ENCODE measurements at regions of chr5 and their contacts with region 1.

Region 1: GRCh38 chr5:151252762-151253604 is at the start of gene GM2A:
- DNase-seq: peak; percentile 100
- H3K4me3 ChIP-seq: peak within 1 kb of the TSS; percentile 97
- H3K27ac ChIP-seq: peak within 1 kb of the TSS; percentile 88
- H3K4me1 ChIP-seq: peaks cover 56% of the 10 kb centered on the region
- CTCF ChIP-seq: no peak
- total RNA-seq, gene GM2A: 52.4 and 60.2 TPM in 2 replicates

Region 2: GRCh38 chr5:150486402-150487198 is 766.4 kb before region 1 on chr5:
- CTCF ChIA-PET with region 1: no interaction called
- POLR2A ChIA-PET with region 1: interaction called, 4 read pairs
- intact Hi-C with region 1: loop called (anchors 10 kb)
- DNase-seq: peak; percentile 79
- H3K4me3 ChIP-seq: peak overlapping the region; percentile 92
- H3K27ac ChIP-seq: peak overlapping the region; percentile 73
- H3K4me1 ChIP-seq: peaks cover 57% of the 10 kb centered on the region
- CTCF ChIP-seq: no peak

Region 3: GRCh38 chr5:151126199-151126645 is 126.8 kb before region 1 on chr5:
- CTCF ChIA-PET with region 1: interaction called, 9 read pairs
- POLR2A ChIA-PET with region 1: interaction called, 14 read pairs
- intact Hi-C with region 1: no loop called
- DNase-seq: peak; percentile 83
- H3K4me3 ChIP-seq: no peak overlapping the region
- H3K27ac ChIP-seq: peak overlapping the region; percentile 86
- H3K4me1 ChIP-seq: peaks cover 91% of the 10 kb centered on the region
- CTCF ChIP-seq: peak; percentile 94

Region 4: GRCh38 chr5:151196556-151197290 is 56.3 kb before region 1 on chr5:
- CTCF ChIA-PET with region 1: interaction called, 3 read pairs
- POLR2A ChIA-PET with region 1: interaction called, 5 read pairs
- intact Hi-C with region 1: loop called (anchors 2 kb)
- DNase-seq: peak; percentile 96
- H3K4me3 ChIP-seq: peak overlapping the region; percentile 25
- H3K27ac ChIP-seq: peak overlapping the region; percentile 92
- H3K4me1 ChIP-seq: peaks cover 55% of the 10 kb centered on the region
- CTCF ChIP-seq: no peak

Region 5: DNA sequence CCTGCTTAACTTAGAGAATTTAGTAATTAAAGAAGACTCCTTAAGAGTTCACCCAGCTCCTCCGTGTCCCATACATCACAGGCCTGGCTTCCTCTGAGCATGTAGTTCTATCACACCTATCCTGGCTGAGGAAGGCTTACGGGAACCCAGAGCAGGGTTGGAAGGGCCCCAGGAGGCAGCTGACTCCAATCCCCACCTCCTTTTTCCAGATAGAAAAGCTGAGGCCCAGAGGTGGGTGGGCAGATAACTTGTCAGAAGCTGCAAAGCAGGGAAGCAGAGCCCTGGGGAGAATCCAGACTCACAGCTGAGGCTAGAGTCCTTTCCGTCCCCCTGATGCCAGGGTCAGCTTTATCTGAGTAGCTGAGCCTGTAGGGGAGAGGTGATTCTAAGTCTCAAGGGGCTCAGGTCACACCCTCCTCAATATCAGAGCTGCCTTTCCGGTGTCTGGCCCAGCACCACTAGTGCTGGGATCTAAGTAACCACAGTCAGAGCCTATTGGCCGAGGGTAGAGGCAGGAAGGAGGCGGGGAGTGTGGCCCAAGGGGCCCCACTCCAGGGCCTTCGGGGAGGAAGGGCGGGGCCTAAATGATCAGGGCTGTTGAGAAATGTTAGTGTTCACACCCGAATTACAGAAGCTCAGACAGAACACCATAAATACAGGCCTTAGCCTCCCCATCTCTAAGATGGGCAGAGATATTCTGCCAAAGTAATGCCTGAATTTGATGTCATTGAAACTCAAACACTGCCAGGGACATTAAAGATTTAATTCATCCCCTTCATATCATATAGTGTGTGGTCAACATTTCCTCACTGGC is 39.0 kb before region 1 on chr5:
- CTCF ChIA-PET with region 1: interaction called, 6 read pairs
- POLR2A ChIA-PET with region 1: interaction called, 13 read pairs
- intact Hi-C with region 1: loop called (anchors 5 kb)
- DNase-seq: peak; percentile 97
- H3K4me3 ChIP-seq: peak overlapping the region; percentile 67
- H3K27ac ChIP-seq: peak overlapping the region; percentile 98
- H3K4me1 ChIP-seq: peaks cover 97% of the 10 kb centered on the region
- CTCF ChIP-seq: no peak

Region 6: GRCh38 chr5:151239237-151239861 is 13.6 kb before region 1 on chr5:
- CTCF ChIA-PET with region 1: interaction called, 3 read pairs
- POLR2A ChIA-PET with region 1: interaction called, 49 read pairs
- intact Hi-C with region 1: no loop called
- DNase-seq: peak; percentile 81
- H3K4me3 ChIP-seq: peak overlapping the region; percentile 49
- H3K27ac ChIP-seq: peak overlapping the region; percentile 72
- H3K4me1 ChIP-seq: peaks cover 79% of the 10 kb centered on the region
- CTCF ChIP-seq: peak; percentile 99

Region 7: DNA sequence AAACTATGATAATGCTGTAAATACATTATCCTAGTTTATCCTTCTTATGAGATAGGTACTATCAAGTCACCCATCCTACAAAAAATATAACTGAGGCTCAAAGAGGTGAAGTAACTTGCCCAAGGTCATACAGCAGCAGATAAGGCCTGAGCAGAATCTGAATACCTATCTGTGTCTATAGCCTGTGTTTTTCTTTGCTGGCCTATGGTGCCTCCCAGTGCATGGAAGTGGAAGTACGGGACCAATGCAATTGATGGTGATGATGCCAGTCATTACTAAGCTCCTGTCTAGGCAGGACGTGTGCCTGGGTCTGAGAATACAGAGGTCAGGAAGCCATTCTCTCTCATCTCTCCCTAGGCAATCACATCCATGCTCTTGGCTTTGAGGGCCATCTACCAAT is 270.4 kb after region 1 on chr5:
- CTCF ChIA-PET with region 1: no interaction called
- POLR2A ChIA-PET with region 1: no interaction called
- intact Hi-C with region 1: no loop called
- DNase-seq: peak; percentile 45
- H3K4me3 ChIP-seq: no peak overlapping the region
- H3K27ac ChIP-seq: no peak overlapping the region
- H3K4me1 ChIP-seq: no peaks in the 10 kb centered on the region
- CTCF ChIP-seq: peak; percentile 79

Region 8: DNA sequence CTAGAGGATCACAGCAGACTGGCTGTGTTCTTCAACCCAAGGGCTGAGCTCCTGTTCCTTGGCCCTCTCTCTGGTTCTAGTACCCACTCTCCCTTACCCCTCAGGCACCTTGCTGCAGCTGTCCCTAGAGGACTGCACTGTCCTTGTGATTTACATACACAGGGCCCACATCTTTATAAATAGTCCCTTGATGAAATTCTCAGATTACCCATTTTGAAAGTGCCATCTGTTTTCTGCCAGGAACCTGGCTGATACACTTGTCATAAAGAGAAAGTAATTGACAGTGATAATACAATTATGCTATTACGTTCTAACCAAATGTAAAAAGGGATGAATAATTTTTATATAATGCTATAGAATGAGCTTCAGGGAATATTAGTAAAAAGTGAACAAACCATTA is 450.2 kb after region 1 on chr5:
- CTCF ChIA-PET with region 1: no interaction called
- POLR2A ChIA-PET with region 1: no interaction called
- intact Hi-C with region 1: loop called (anchors 5 kb)
- DNase-seq: no peak
- H3K4me3 ChIP-seq: no peak overlapping the region
- H3K27ac ChIP-seq: no peak overlapping the region
- H3K4me1 ChIP-seq: no peaks in the 10 kb centered on the region
- CTCF ChIP-seq: no peak